ENCODE measurements at regions of chr12 and their contacts with region 1.

Region 1: GRCh38 chr12:949453-950191 is at the start of gene RAD52:
- DNase-seq: peak; percentile 95 to 99 (median 97)
- ATAC-seq: peak; percentile 87
- H3K4me3 ChIP-seq: peak within 1 kb of the TSS; percentile 75
- H3K4me3 Mint-ChIP-seq: peak within 1 kb of the TSS; percentile 98
- H3K27ac ChIP-seq: peak within 1 kb of the TSS; percentile 80 to 86
- H3K27ac Mint-ChIP-seq: peak within 1 kb of the TSS; percentile 90
- H3K4me1 ChIP-seq: peaks cover 24% of the 10 kb centered on the region
- H3K4me1 Mint-ChIP-seq: peaks cover 34% of the 10 kb centered on the region
- H3K27me3 ChIP-seq: no peaks in the 10 kb centered on the region
- H3K27me3 Mint-ChIP-seq: no peaks in the 10 kb centered on the region
- CTCF ChIP-seq: peak; percentile 96
- total RNA-seq, gene RAD52: 7.0 to 8.1 TPM

Region 2: GRCh38 chr12:459430-460258 is 490.0 kb before region 1 on chr12 and contains the start of gene B4GALNT3:
- CTCF ChIA-PET with region 1: no interaction called
- POLR2A ChIA-PET with region 1: no interaction called
- intact Hi-C with region 1: loop called in 1 of 2 experiments (anchors 10 kb)
- DNase-seq: peak in 13 of 14 experiments; percentile 6 to 78 (median 28)
- ATAC-seq: peak; percentile 64
- H3K4me3 ChIP-seq: peak within 1 kb of the TSS; percentile 63
- H3K4me3 Mint-ChIP-seq: peak within 1 kb of the TSS; percentile 84
- H3K27ac ChIP-seq: no peak within 1 kb of the TSS
- H3K27ac Mint-ChIP-seq: no peak within 1 kb of the TSS
- H3K4me1 ChIP-seq: peaks cover 21% of the 10 kb centered on the region
- H3K4me1 Mint-ChIP-seq: peaks cover 20% of the 10 kb centered on the region
- H3K27me3 ChIP-seq: peaks cover 4 to 7% of the 10 kb centered on the region in 2 experiments
- H3K27me3 Mint-ChIP-seq: peaks cover 4% of the 10 kb centered on the region
- CTCF ChIP-seq: no peak
- total RNA-seq, gene B4GALNT3: 1.4 to 1.8 TPM

Region 3: GRCh38 chr12:642633-643474 is 306.8 kb before region 1 on chr12:
- CTCF ChIA-PET with region 1: interaction called, 3 read pairs
- POLR2A ChIA-PET with region 1: no interaction called
- intact Hi-C with region 1: loop called in 1 of 2 experiments (anchors 10 kb)
- DNase-seq: peak; percentile 49 to 92 (median 76)
- ATAC-seq: peak; percentile 74
- H3K4me3 ChIP-seq: peak overlapping the region; percentile 67
- H3K4me3 Mint-ChIP-seq: peak overlapping the region; percentile 84
- H3K27ac ChIP-seq: peak overlapping the region; percentile 84 to 85
- H3K27ac Mint-ChIP-seq: peak overlapping the region; percentile 93
- H3K4me1 ChIP-seq: peaks cover 63% of the 10 kb centered on the region
- H3K4me1 Mint-ChIP-seq: peaks cover 63% of the 10 kb centered on the region
- H3K27me3 ChIP-seq: no peaks in the 10 kb centered on the region
- H3K27me3 Mint-ChIP-seq: no peaks in the 10 kb centered on the region
- CTCF ChIP-seq: peak; percentile 15

Region 4: GRCh38 chr12:905261-906031 is 44.2 kb before region 1 on chr12:
- CTCF ChIA-PET with region 1: interaction called, 6 read pairs
- POLR2A ChIA-PET with region 1: interaction called, 8 read pairs
- intact Hi-C with region 1: loop called in 1 of 2 experiments (anchors 5 kb)
- DNase-seq: peak in 3 of 14 experiments; percentile 25 to 40 (median 30)
- ATAC-seq: peak; percentile 75
- H3K4me3 ChIP-seq: no peak overlapping the region
- H3K4me3 Mint-ChIP-seq: peak overlapping the region; percentile 12
- H3K27ac ChIP-seq: no peak overlapping the region
- H3K27ac Mint-ChIP-seq: peak overlapping the region; percentile 51
- H3K4me1 ChIP-seq: no peaks in the 10 kb centered on the region
- H3K4me1 Mint-ChIP-seq: peaks cover 43% of the 10 kb centered on the region
- H3K27me3 ChIP-seq: no peaks in the 10 kb centered on the region
- H3K27me3 Mint-ChIP-seq: no peaks in the 10 kb centered on the region
- CTCF ChIP-seq: no peak

Region 5: GRCh38 chr12:1093166-1093751 is 143.6 kb after region 1 on chr12:
- CTCF ChIA-PET with region 1: interaction called, 3 read pairs
- POLR2A ChIA-PET with region 1: no interaction called
- intact Hi-C with region 1: loop called in 1 of 2 experiments (anchors 5 kb)
- DNase-seq: peak in 8 of 14 experiments; percentile 3 to 68 (median 28)
- ATAC-seq: peak; percentile 77
- H3K4me3 ChIP-seq: no peak overlapping the region
- H3K4me3 Mint-ChIP-seq: no peak overlapping the region
- H3K27ac ChIP-seq: no peak overlapping the region
- H3K27ac Mint-ChIP-seq: no peak overlapping the region
- H3K4me1 ChIP-seq: no peaks in the 10 kb centered on the region
- H3K4me1 Mint-ChIP-seq: peaks cover 16% of the 10 kb centered on the region
- H3K27me3 ChIP-seq: no peaks in the 10 kb centered on the region
- H3K27me3 Mint-ChIP-seq: no peaks in the 10 kb centered on the region
- CTCF ChIP-seq: peak; percentile 71

Region 6: DNA sequence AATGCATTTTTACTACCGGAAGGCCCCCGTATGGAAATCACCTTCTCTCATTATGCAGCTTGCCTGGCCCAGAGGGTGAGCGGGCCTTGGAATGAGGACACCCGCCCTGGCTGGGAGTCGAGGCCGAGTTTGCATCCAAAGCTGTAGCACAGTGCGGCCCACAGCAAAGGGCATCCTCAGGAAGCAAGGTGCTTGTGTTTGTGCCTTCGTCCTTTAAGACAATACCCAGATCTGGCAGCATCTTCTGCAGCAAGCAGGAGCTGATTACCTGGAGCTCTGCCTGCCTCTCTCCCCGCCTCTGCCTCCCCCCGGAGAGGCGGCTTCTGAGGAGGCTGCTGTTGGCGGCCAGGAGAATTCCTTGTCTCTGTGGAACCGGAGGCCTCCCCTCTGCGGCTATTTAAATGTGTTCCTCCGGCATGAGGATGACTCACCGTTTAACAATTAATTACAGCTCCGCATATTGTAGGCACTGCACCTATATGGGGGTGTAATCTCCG is 1248.4 kb after region 1 on chr12:
- CTCF ChIA-PET with region 1: no interaction called
- POLR2A ChIA-PET with region 1: no interaction called
- intact Hi-C with region 1: no loop called
- DNase-seq: no peak
- ATAC-seq: no peak
- H3K4me3 ChIP-seq: no peak overlapping the region
- H3K4me3 Mint-ChIP-seq: no peak overlapping the region
- H3K27ac ChIP-seq: no peak overlapping the region
- H3K27ac Mint-ChIP-seq: no peak overlapping the region
- H3K4me1 ChIP-seq: no peaks in the 10 kb centered on the region
- H3K4me1 Mint-ChIP-seq: no peaks in the 10 kb centered on the region
- H3K27me3 ChIP-seq: no peaks in the 10 kb centered on the region
- H3K27me3 Mint-ChIP-seq: peaks cover 8% of the 10 kb centered on the region
- CTCF ChIP-seq: no peak

Measured in CD4-positive, alpha-beta T cell (primary cell).